ENCODE measurements at regions of chr15 and their contacts with region 1.

Region 1: GRCh38 chr15:78437762-78438302 is at the start of gene IREB2:
- H3K4me3 ChIP-seq: peak within 1 kb of the TSS; percentile 99
- H3K27ac ChIP-seq: peak within 1 kb of the TSS; percentile 93
- H3K4me1 ChIP-seq: peaks cover 9% of the 10 kb centered on the region; the same call in 1 of the 2 replicates
- CTCF ChIP-seq: no peak; the same call in 1 of the 2 replicates

Region 2: DNA sequence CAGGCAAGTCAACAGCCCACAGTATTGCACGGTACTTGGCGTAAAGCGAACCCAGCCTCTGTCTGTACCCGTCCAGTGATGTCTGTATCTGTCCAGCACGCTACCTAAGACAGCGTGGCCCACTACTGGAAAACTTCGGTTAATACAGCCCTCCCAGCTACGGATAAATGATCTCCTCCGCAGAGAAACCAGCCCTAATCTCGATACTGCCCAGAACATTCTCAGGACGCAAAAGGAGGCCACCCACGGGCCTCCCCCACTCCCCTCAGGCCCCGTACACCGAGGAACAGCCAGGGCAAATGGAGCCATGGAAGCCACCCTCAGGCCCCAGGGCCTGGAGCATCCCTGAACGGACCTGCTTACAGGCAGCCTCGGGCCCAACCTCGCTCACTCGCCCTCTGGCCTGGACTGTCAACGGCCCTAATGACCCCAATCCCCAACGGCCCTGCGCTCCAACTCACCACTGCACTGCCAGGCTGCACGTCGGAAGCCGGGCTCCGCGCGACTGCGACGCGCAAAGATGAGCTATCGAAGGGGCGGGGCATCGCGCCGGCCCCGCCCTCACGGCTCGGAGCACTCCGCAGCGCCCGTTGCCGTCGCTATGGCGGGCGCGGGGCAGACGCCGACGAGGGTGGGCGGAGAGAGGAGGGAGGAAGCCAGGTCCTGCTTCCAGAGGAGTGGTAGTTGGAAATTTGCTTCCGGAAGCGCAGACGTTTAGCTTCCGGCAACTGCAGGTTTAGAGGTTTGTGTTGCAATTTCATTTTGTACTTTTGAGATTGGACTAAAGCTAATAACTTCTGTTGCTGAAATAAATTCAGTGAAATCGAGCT is 138.5 kb before region 1 on chr15 and contains the start of gene SKIC8:
- CTCF ChIA-PET with region 1: interaction called, 3 read pairs
- POLR2A ChIA-PET with region 1: interaction called, 43 read pairs
- H3K4me3 ChIP-seq: peak within 1 kb of the TSS; percentile 87
- H3K27ac ChIP-seq: peak within 1 kb of the TSS; percentile 63
- H3K4me1 ChIP-seq: no peaks in the 10 kb centered on the region
- CTCF ChIP-seq: peak; percentile 56; the same call in 1 of the 2 replicates

Region 3: DNA sequence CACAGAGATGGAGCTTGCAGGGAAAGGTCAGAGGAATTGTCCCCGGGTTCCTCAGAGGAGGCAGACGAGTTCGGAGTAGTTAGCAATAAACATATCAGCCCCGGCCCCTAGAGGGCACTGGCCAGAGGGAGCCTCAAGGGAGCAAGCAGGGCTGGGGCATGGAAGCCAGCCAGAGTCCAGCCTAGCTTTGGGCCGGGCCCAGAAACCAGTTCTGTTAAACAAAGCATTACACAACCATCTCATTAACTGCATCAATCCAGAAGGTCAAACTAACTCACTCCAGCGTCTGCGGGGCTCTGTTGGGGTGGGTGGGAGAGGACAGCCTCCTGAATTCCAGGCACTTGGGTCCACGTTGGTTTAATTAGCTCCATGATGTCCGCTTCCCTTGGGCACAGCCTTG is 40.9 kb before region 1 on chr15:
- CTCF ChIA-PET with region 1: no interaction called
- POLR2A ChIA-PET with region 1: no interaction called
- H3K4me3 ChIP-seq: no peak overlapping the region
- H3K27ac ChIP-seq: no peak overlapping the region
- H3K4me1 ChIP-seq: no peaks in the 10 kb centered on the region
- CTCF ChIP-seq: no peak

Region 4: GRCh38 chr15:78422571-78423340 is 15.1 kb before region 1 on chr15:
- CTCF ChIA-PET with region 1: interaction called, 35 read pairs
- POLR2A ChIA-PET with region 1: interaction called, 15 read pairs
- H3K4me3 ChIP-seq: no peak overlapping the region
- H3K27ac ChIP-seq: no peak overlapping the region
- H3K4me1 ChIP-seq: no peaks in the 10 kb centered on the region
- CTCF ChIP-seq: peak; percentile 54; the same call in 1 of the 2 replicates

Region 5: DNA sequence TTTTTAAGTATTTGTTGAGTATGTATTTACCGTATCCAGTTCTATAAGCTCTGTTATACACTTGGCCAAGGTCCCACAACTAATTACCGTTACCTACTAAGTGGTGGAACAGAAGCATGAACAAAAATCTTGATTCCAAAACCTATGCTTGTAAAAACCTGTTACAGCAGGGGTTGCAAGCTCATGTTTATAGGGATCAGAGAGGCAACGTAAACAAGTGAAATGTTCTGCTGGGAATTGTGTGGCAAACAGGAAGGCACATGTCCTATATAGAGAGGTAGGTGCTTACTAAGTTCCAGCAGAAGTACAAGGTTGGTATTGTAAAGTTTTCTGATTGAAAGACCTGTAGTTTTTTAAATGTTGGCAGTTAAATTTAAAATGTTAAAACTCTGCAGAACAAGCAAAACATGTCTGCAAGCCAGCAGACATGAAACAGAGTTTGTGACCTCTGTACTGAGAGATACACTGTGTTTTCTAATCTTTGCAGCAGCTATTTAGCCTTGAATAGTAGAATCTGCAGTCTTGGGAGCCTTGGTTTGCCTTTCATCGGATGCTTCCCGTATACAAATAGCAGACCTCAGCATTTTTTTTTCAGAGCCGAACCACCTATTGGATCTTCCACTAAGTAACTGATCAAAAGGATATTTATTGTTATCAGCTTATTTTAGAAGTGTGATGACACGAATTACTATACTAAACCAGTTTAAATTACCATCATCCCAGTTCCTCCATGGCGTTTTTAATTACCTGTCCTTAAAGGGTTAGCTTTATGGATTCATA is 11.6 kb after region 1 on chr15:
- CTCF ChIA-PET with region 1: interaction called, 4 read pairs
- POLR2A ChIA-PET with region 1: interaction called, 10 read pairs
- H3K4me3 ChIP-seq: no peak overlapping the region
- H3K27ac ChIP-seq: no peak overlapping the region; the same call in 1 of the 2 replicates
- H3K4me1 ChIP-seq: peaks cover 31% of the 10 kb centered on the region
- CTCF ChIP-seq: no peak

Region 6: DNA sequence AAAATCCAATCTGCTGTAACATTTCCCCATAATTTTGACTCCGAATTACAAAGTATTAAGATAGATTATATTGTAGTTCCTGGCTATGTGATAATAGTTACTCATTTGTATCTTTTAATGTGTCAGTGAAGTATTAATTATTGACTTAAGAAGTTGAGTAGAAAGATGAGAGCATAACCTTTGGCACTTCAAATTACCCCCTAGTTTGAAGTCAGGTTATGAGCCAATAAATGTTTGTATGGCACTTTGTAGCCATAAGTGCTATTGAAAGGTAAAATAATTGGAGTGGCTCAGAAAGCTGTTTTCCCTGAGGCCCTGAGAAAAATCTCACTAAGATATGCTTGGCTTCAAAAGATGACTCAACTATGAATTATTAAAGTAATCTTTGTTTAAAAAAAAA is 31.2 kb after region 1 on chr15:
- CTCF ChIA-PET with region 1: no interaction called
- POLR2A ChIA-PET with region 1: interaction called, 10 read pairs
- H3K4me3 ChIP-seq: no peak overlapping the region
- H3K27ac ChIP-seq: no peak overlapping the region
- H3K4me1 ChIP-seq: no peaks in the 10 kb centered on the region
- CTCF ChIP-seq: no peak

Region 7: DNA sequence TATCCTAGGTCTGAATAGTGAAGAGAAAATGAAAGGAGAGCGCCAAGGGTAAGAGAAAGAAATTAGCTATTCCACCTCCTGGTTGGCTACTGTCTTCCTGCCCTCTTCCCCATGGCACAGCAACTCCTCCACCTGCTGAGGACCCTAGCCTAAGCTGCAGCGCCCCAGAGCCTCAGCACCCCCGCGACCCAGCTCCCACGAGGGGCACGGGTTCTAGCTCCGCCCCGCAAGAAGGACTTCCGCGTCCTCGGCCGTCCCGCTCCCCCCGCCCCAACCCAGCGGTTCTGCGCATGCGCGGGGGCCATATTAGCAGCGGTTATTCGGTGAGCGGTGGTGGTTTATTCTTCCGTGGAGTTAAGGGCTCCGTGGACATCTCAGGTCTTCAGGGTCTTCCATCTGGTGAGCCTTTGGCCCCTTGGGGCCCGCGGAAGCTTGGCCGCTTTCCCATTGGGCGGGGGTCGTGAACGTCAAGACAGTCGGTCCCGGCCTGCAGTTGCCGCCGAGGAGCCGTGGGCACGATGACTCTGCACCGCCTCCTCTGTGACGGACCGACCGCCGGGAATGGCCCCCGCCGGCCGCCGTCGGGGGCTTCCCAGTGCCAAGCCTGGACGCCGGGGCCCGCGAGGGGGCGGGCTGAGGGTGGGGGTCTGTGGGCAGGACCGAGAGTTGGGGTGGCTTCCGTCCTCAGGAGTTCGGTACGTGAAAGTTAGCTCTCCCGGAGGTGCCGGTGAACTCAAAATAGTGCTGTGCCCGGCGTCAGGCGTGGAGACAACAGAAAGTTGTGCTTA is 102.5 kb after region 1 on chr15 and contains the start of gene PSMA4:
- CTCF ChIA-PET with region 1: no interaction called
- POLR2A ChIA-PET with region 1: interaction called, 11 read pairs
- H3K4me3 ChIP-seq: peak within 1 kb of the TSS; percentile 93
- H3K27ac ChIP-seq: peak within 1 kb of the TSS; percentile 95
- H3K4me1 ChIP-seq: peaks cover 10% of the 10 kb centered on the region; the same call in 1 of the 2 replicates
- CTCF ChIP-seq: peak; percentile 19

Region 8: GRCh38 chr15:78565097-78565951 is 127.5 kb after region 1 on chr15 and contains the start of gene CHRNA5:
- CTCF ChIA-PET with region 1: interaction called, 3 read pairs
- POLR2A ChIA-PET with region 1: interaction called, 27 read pairs
- H3K4me3 ChIP-seq: peak within 1 kb of the TSS; percentile 57
- H3K27ac ChIP-seq: peak within 1 kb of the TSS; percentile 93
- H3K4me1 ChIP-seq: peaks cover 4% of the 10 kb centered on the region; the same call in 1 of the 2 replicates
- CTCF ChIP-seq: no peak

Region 9: GRCh38 chr15:78790030-78790429 is 352.2 kb after region 1 on chr15:
- CTCF ChIA-PET with region 1: no interaction called
- POLR2A ChIA-PET with region 1: no interaction called
- H3K4me3 ChIP-seq: no peak overlapping the region
- H3K27ac ChIP-seq: no peak overlapping the region
- H3K4me1 ChIP-seq: no peaks in the 10 kb centered on the region
- CTCF ChIP-seq: no peak

Measured in HEK293 (cell line).